Ascending aorta (tissue), 2 donors: ENCODE measurements at regions of chr2 and their contacts with region 1.

Region 1: GRCh38 chr2:98608116-98608999 is at the starts of genes COA5 and UNC50:
- DNase-seq: peak; percentile 58 to 93
- H3K4me3 ChIP-seq: peak within 1 kb of the TSS; percentile 77 to 98
- H3K27ac ChIP-seq: peak within 1 kb of the TSS; percentile 96
- H3K4me1 ChIP-seq: peaks cover 25 to 34% of the 10 kb centered on the region in 2 donors
- H3K27me3 ChIP-seq: no peaks in the 10 kb centered on the region
- CTCF ChIP-seq: peak in 1 of 3 experiments; percentile 10
- total RNA-seq, gene COA5: 86.3 TPM
- total RNA-seq, gene UNC50: 34.4 TPM

Region 2: GRCh38 chr2:98561902-98562695 is 46.3 kb before region 1 on chr2:
- intact Hi-C with region 1: loop called (anchors 1 kb)
- DNase-seq: no peak
- H3K4me3 ChIP-seq: no peak overlapping the region
- H3K27ac ChIP-seq: peak overlapping the region; percentile 89 to 90
- H3K4me1 ChIP-seq: peaks cover 0 to 16% of the 10 kb centered on the region in 2 donors
- H3K27me3 ChIP-seq: no peaks in the 10 kb centered on the region
- CTCF ChIP-seq: no peak

Region 3: GRCh38 chr2:98835831-98836385 is 227.6 kb after region 1 on chr2:
- intact Hi-C with region 1: no loop called
- DNase-seq: no peak
- H3K4me3 ChIP-seq: no peak overlapping the region
- H3K27ac ChIP-seq: no peak overlapping the region
- H3K4me1 ChIP-seq: no peaks in the 10 kb centered on the region
- H3K27me3 ChIP-seq: no peaks in the 10 kb centered on the region
- CTCF ChIP-seq: no peak

Region 4: DNA sequence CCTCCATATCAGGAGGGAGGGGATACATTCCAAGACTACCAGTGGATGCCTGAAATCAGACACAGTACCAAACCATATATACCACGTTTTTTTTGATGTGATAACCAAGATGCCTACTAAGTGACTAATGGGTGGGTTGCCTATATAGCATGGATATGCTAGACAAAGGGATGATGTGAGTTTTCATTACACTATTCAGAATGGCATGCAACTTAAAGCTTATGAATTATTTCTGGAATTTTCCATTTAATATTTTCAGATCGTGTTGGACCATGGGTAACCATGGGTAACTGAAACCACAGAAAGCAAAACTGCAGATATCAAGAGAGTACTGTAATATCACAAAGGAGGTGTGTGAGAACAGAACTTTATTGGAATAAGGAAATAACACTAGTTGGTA is 367.3 kb after region 1 on chr2:
- intact Hi-C with region 1: no loop called
- DNase-seq: no peak
- H3K4me3 ChIP-seq: no peak overlapping the region
- H3K27ac ChIP-seq: no peak overlapping the region
- H3K4me1 ChIP-seq: no peaks in the 10 kb centered on the region
- H3K27me3 ChIP-seq: no peaks in the 10 kb centered on the region
- CTCF ChIP-seq: no peak

Region 5: GRCh38 chr2:99403524-99403923 is 795.2 kb after region 1 on chr2:
- intact Hi-C with region 1: no loop called
- DNase-seq: no peak
- H3K4me3 ChIP-seq: no peak overlapping the region
- H3K27ac ChIP-seq: no peak overlapping the region
- H3K4me1 ChIP-seq: no peaks in the 10 kb centered on the region
- H3K27me3 ChIP-seq: no peaks in the 10 kb centered on the region
- CTCF ChIP-seq: no peak